HEK293T (cell line): ENCODE measurements at regions of chr7 and their contacts with region 1.

Region 1: DNA sequence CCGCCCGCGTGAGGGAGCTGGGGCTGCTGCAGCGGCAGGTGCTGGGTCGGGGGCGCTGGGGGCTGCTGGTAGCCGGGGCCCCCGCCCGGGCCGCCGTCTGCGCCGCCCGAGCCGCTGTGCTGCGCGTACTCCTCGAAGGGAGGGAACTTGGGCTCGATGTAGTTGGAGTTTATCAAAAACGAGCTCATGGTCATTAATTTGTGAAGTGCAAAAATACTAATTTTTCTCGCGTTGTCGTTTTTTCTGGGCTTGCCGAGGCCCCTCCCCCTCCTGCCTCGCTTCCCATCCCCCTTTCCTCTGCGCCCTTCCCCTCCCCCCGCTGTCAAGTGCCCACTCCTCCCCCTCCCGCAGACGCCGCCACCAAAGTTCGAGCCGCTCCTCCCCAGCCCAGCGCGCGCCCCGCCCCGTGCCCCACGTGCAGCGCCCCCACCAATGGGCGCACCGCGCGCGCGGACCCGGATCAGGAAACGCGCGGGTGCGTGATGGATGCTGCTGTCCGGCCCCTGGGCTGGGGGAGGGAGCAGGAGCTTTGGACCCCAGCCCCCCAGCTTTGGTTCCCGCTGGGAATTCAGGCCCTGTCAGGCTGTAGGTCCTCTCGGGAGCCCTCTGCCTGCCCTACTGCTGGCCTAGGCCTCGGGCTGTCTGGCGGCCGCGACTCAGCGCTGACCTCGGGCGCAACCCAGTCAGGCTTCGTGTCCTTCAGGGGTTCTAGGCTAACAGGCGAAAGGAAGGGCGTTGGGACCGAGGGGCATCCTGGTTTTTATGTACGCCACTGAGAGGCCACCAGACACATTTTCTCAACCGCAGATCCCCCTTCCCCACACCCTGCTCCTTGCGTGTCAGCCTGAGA is at the start of gene HOXA4:
- DNase-seq: peak; percentile 78

Region 2: GRCh38 chr7:27143023-27143949 is 12.5 kb after region 1 on chr7 and contains the start of gene HOXA5:
- CTCF ChIA-PET with region 1: interaction called, 4 read pairs
- POLR2A ChIA-PET with region 1: interaction called, 12 read pairs
- DNase-seq: peak; percentile 79

Region 3: DNA sequence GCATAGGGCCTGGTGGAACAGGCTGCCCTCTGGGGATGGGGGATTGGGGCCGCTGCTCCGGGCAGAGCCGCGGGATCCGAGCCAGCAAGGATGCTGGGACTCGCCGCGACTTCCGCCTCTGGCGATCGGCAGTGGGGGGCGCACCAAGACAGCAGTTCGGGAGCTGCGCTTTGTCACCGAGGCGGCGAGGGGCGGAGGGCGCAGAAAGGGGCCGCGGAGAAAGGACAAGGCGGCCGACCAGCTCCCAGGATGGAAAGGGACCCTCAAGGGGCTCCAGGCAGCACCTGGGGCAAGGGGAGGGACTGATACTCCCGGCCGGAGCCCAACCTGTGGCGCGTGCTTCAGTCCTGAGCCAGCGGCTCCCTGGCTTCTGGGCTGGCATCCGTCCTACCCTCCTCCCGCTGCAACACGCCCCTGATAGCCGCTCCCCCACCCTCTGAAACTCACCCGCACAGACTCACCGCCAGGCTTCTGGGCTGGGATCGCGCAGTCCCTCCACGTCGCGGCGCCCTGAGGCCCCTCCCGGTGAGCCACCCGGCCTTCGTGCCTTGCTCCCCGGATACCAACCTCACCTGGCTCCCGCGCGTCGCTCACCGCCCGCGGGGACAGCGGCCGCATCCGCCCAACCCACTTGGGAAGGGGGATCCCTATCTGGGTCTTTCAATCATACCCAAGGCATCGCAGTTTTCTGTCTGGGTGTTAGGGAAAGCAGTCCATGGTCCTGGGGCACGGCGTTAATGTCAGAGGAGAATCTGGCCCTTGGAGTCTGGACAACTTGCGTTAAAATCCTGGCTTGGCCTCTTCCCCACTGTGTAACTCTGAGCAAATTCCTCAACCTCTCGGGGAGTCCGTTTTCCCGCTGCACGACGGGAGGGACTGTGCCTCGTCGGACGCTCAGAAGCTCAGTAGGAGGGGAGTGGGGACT is 104.9 kb after region 1 on chr7:
- CTCF ChIA-PET with region 1: no interaction called
- POLR2A ChIA-PET with region 1: no interaction called
- DNase-seq: peak; percentile 80